ENCODE measurements at regions of chr6 and their contacts with region 1.

Region 1: DNA sequence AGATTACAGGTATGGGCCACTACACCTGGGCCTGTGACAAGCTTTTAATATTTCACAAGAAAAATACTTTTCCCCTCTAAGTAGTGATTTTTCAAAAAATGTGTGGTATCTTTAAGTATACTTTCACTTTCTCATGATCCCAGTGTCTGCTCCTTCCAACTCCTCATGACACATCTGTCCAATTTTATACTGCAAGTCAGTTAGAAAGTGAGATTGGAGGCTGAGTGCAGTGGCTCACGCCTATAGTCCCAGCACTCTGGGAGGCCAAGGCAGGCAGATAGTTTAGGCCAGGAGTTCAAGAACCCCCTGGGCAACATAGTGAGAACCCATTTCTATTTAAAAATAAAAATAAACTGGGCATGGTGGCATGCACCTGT is 20.2 kb downstream of the PIM1 start:
- DNase-seq: peak in 1 of 4 experiments; percentile 55
- ATAC-seq: no peak
- H3K4me3 ChIP-seq: no peak overlapping the region
- H3K27ac ChIP-seq: peak overlapping the region; percentile 68
- H3K4me1 ChIP-seq: peaks cover 55 to 77% of the 10 kb centered on the region in 2 experiments
- H3K27me3 ChIP-seq: no peaks in the 10 kb centered on the region
- CTCF ChIP-seq: no peak
- EP300 ChIP-seq: no peak
- POLR2A ChIP-seq: no peak
- RAD21 ChIP-seq: no peak

Region 2: GRCh38 chr6:37177077-37177934 is 12.8 kb before region 1 on chr6:
- CTCF ChIA-PET with region 1: no interaction called
- POLR2A ChIA-PET with region 1: interaction called, 24 read pairs
- in situ Hi-C with region 1: no loop called
- intact Hi-C with region 1: no loop called
- DNase-seq: peak; percentile 41 to 83 (median 62)
- ATAC-seq: peak; percentile 59
- H3K4me3 ChIP-seq: no peak overlapping the region
- H3K27ac ChIP-seq: peak overlapping the region; percentile 82
- H3K4me1 ChIP-seq: peaks cover 32 to 52% of the 10 kb centered on the region in 2 experiments
- H3K27me3 ChIP-seq: no peaks in the 10 kb centered on the region
- CTCF ChIP-seq: peak; percentile 43 to 61 (median 53); a peak in 5 of 6 replicates
- EP300 ChIP-seq: peak; percentile 56
- POLR2A ChIP-seq: no peak; the same call in 1 of the 2 replicates
- RAD21 ChIP-seq: peak; percentile 47 to 71

Region 3: DNA sequence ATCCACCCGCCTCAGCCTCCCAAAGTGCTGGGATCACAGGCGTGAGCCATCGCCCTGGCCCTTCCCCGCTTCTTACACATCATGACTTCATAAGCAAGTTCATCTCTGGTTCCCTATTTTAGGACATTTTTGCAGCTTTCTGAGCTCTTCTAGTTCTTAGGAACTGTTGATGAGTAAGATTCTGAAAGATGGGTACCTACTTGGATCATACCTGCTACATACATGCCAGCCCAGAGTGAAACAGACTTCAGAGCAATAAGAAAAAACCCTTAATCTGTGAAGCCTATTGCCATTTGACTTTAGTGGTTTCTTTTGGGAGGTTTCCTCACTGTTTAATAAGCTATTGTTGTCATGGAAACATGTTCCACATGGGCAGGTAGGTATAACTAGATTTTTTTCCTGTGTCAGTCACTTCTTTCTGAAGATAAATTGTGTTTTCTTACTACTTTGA is 95.7 kb after region 1 on chr6:
- CTCF ChIA-PET with region 1: no interaction called
- POLR2A ChIA-PET with region 1: no interaction called
- in situ Hi-C with region 1: no loop called
- intact Hi-C with region 1: no loop called
- DNase-seq: no peak
- ATAC-seq: no peak
- H3K4me3 ChIP-seq: no peak overlapping the region
- H3K27ac ChIP-seq: no peak overlapping the region
- H3K4me1 ChIP-seq: peaks cover 0 to 4% of the 10 kb centered on the region in 2 experiments; a peak in 2 of 5 replicates
- H3K27me3 ChIP-seq: no peaks in the 10 kb centered on the region
- CTCF ChIP-seq: no peak
- EP300 ChIP-seq: no peak
- POLR2A ChIP-seq: no peak
- RAD21 ChIP-seq: no peak

Measured in K562 (cell line).